ENCODE measurements at regions of chr10 and their contacts with region 1.

Region 1: DNA sequence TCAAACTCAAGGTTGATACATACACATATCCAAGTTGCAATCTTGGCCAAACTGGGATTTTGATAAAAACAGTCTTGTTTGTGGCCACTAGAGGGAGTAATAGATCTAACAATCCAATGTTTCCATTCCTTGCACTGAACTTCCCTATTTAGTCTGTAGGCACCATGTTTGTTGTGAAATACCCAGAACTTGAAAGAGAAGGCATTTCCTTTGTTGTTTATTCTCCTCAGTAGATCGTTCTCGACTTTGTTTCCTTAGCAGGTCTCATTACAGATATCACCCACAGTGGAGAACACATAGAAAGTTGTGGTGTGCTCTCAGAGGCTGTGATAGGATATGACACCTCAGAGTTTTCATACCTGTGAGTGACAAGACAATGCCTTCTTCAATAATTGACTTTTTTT is 70.3 kb upstream of the MXI1 start:
- DNase-seq: no peak
- ATAC-seq: peak; percentile 91 to 93
- H3K4me3 ChIP-seq: no peak overlapping the region
- H3K27ac ChIP-seq: peak overlapping the region; percentile 37 to 65 (median 58)
- H3K4me1 ChIP-seq: peaks cover 11 to 17% of the 10 kb centered on the region in 2 donors
- H3K27me3 ChIP-seq: no peaks in the 10 kb centered on the region
- CTCF ChIP-seq: peak; percentile 77 to 93 (median 83)
- POLR2A ChIP-seq: no peak

Region 2: GRCh38 chr10:108975459-108976058 is 1161.6 kb before region 1 on chr10:
- in situ Hi-C with region 1: no loop called
- intact Hi-C with region 1: no loop called
- DNase-seq: no peak
- ATAC-seq: no peak
- H3K4me3 ChIP-seq: no peak overlapping the region
- H3K27ac ChIP-seq: no peak overlapping the region
- H3K4me1 ChIP-seq: no peaks in the 10 kb centered on the region
- H3K27me3 ChIP-seq: no peaks in the 10 kb centered on the region
- CTCF ChIP-seq: no peak
- POLR2A ChIP-seq: no peak

Region 3: DNA sequence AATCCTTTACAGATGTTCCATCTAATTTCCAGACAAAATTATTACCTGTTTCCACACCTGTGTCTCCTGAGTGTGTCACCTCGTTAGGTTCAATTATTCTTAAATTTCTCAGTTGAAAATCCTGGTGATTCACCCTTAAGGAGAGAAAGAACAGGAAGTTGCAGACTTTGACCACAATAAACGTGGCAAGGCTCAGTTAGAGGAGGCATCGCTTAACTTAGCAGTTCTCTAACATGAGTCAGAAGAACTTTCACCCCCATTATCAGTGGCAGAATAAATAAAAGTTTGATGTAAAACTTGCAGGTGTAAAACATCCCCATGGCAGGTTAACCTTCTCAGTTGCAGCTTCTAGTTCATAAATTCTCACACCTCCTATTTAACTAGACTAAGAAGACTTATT is 222.2 kb before region 1 on chr10:
- in situ Hi-C with region 1: no loop called
- intact Hi-C with region 1: no loop called
- DNase-seq: no peak
- ATAC-seq: no peak
- H3K4me3 ChIP-seq: no peak overlapping the region
- H3K27ac ChIP-seq: no peak overlapping the region
- H3K4me1 ChIP-seq: peaks cover 17 to 26% of the 10 kb centered on the region in 2 donors
- H3K27me3 ChIP-seq: no peaks in the 10 kb centered on the region
- CTCF ChIP-seq: no peak
- POLR2A ChIP-seq: no peak

Region 4: DNA sequence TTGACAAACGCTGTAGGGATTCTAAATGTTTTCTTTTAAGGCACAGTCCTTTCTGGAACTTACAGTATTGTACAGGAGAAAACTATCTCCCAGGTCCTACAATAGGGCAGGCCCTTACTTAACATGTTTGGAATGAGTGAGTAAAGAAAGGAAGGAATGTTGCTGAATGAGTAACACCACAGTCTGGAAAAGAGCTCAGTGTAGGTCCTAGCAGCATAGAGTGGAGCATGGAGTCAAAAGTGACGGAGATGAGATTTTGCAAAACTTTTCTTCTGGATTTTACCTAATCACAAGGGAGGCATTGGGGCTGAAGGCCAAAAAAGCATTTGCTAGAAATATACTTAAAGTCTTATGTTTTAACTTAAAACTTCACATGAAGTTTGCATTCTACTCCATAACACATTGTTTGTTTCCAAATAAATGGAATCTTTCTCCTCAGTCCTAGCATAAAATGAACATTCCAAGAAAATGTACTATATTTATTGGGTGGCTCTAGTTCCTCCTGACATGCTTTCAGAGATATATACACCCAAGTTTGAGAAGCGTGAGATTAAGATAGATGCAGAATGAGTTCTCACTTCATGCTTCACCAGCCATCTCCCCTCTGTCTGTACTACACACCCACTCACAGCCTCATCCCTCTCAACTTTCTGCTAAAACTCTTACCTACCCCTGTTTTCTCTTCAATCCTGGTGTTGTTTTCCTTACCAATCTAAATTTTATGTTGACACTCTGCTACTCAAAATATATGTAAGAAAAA is 149.5 kb before region 1 on chr10:
- in situ Hi-C with region 1: no loop called
- intact Hi-C with region 1: no loop called
- DNase-seq: no peak
- ATAC-seq: no peak
- H3K4me3 ChIP-seq: no peak overlapping the region
- H3K27ac ChIP-seq: no peak overlapping the region
- H3K4me1 ChIP-seq: no peaks in the 10 kb centered on the region
- H3K27me3 ChIP-seq: no peaks in the 10 kb centered on the region
- CTCF ChIP-seq: no peak
- POLR2A ChIP-seq: no peak

Region 5: GRCh38 chr10:110192552-110192951 is 55.4 kb after region 1 on chr10:
- in situ Hi-C with region 1: loop called in 1 of 4 experiments (anchors 10 kb)
- intact Hi-C with region 1: no loop called
- DNase-seq: no peak
- ATAC-seq: no peak
- H3K4me3 ChIP-seq: no peak overlapping the region
- H3K27ac ChIP-seq: no peak overlapping the region
- H3K4me1 ChIP-seq: no peaks in the 10 kb centered on the region
- H3K27me3 ChIP-seq: no peaks in the 10 kb centered on the region
- CTCF ChIP-seq: no peak
- POLR2A ChIP-seq: no peak

Region 6: DNA sequence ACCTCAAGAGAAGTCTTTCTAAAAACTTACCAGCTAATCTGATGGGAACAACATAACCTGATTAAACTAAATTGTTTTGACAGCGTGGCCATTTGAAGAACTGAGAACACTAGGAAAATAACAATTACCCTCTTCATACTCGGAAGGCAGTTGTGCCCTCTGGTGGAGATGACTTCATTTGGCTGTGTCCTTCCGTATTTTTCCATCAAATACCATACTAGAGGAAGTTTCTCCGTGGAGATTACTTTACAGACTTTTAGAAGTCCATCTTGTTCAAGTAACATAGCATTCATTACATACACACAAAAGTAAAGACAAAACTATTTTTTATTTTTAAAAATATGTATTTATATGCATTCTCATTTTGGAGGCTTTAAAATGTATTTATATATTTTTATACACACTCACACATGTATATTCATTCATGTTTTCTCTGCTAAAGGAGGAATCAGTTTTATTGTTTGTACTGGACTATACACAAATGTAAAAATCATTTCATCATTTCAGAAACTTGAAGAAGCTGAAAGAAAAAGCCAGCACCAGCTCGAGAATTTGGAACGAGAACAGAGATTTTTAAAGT is 142.4 kb after region 1 on chr10:
- in situ Hi-C with region 1: loop called (anchors 5 kb)
- intact Hi-C with region 1: loop called (anchors 1 kb)
- DNase-seq: peak; percentile 12 to 40
- ATAC-seq: peak; percentile 69 to 87
- H3K4me3 ChIP-seq: no peak overlapping the region
- H3K27ac ChIP-seq: peak overlapping the region in 1 of 4 donors; percentile 1
- H3K4me1 ChIP-seq: peaks cover 18 to 26% of the 10 kb centered on the region in 2 donors
- H3K27me3 ChIP-seq: no peaks in the 10 kb centered on the region
- CTCF ChIP-seq: peak; percentile 69 to 78 (median 74)
- POLR2A ChIP-seq: no peak

Region 7: GRCh38 chr10:110304780-110305421 is 167.8 kb after region 1 on chr10 and contains the start of gene SMNDC1:
- in situ Hi-C with region 1: no loop called
- intact Hi-C with region 1: loop called (anchors 2 kb)
- DNase-seq: peak; percentile 94 to 97
- ATAC-seq: peak; percentile 93 to 96
- H3K4me3 ChIP-seq: peak within 1 kb of the TSS; percentile 74 to 88 (median 86)
- H3K27ac ChIP-seq: peak within 1 kb of the TSS; percentile 91 to 95 (median 94)
- H3K4me1 ChIP-seq: peaks cover 42 to 45% of the 10 kb centered on the region in 2 donors
- H3K27me3 ChIP-seq: no peaks in the 10 kb centered on the region
- CTCF ChIP-seq: no peak
- POLR2A ChIP-seq: peak; percentile 68 to 69
- total RNA-seq, gene SMNDC1: 7.3 to 23.9 (median 10.0) TPM

Region 8: GRCh38 chr10:110556969-110557601 is 419.9 kb after region 1 on chr10:
- in situ Hi-C with region 1: loop called in 2 of 4 experiments (anchors 5 to 10 kb)
- intact Hi-C with region 1: no loop called
- DNase-seq: no peak
- ATAC-seq: no peak
- H3K4me3 ChIP-seq: no peak overlapping the region
- H3K27ac ChIP-seq: no peak overlapping the region
- H3K4me1 ChIP-seq: no peaks in the 10 kb centered on the region
- H3K27me3 ChIP-seq: peaks cover 0 to 5% (median 4%) of the 10 kb centered on the region in 3 donors
- CTCF ChIP-seq: peak in 3 of 5 experiments; percentile 21 to 63 (median 50)
- POLR2A ChIP-seq: no peak

Measured in gastrocnemius medialis (tissue), 4 donors.